Activated CD4-positive, alpha-beta memory T cell treated with anti-CD3 and anti-CD28 coated beads for 36 hours (primary cell): ENCODE measurements at regions of chr5 and their contacts with region 1.

Region 1: DNA sequence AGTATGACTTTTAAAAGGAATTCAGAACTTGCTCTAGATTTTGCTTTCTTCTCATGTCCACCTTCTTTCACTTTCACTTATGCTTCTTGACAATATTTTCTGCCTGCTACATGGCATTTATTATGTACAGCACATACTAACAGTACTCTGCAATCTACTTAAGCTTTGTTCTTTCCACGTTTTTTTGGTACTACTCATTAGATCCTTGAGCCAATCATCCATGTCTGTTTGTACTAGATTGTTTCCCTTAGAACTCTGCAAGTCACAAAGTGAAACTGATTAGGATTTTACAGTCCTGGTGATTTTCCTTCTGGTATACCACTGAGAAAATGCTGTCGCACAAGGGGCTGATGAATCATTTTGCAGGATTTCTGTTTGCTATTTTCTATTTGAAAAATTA is 78.3 kb downstream of the PARP8 start:
- DNase-seq: no peak
- H3K4me3 Mint-ChIP-seq: peak overlapping the region; percentile 72
- H3K27ac Mint-ChIP-seq: peak overlapping the region; percentile 79
- H3K4me1 Mint-ChIP-seq: peaks cover 60% of the 10 kb centered on the region
- H3K27me3 Mint-ChIP-seq: no peaks in the 10 kb centered on the region

Region 2: GRCh38 chr5:50576686-50577256 is 168.0 kb before region 1 on chr5:
- CTCF ChIA-PET with region 1: no interaction called
- POLR2A ChIA-PET with region 1: no interaction called
- intact Hi-C with region 1: loop called (anchors 5 kb)
- DNase-seq: no peak
- H3K4me3 Mint-ChIP-seq: no peak overlapping the region
- H3K27ac Mint-ChIP-seq: no peak overlapping the region
- H3K4me1 Mint-ChIP-seq: peaks cover 17% of the 10 kb centered on the region
- H3K27me3 Mint-ChIP-seq: no peaks in the 10 kb centered on the region

Region 3: GRCh38 chr5:50595199-50595598 is 149.6 kb before region 1 on chr5:
- CTCF ChIA-PET with region 1: no interaction called
- POLR2A ChIA-PET with region 1: no interaction called
- intact Hi-C with region 1: loop called (anchors 1 kb)
- DNase-seq: no peak
- H3K4me3 Mint-ChIP-seq: no peak overlapping the region
- H3K27ac Mint-ChIP-seq: peak overlapping the region; percentile 80
- H3K4me1 Mint-ChIP-seq: peaks cover 42% of the 10 kb centered on the region
- H3K27me3 Mint-ChIP-seq: no peaks in the 10 kb centered on the region

Region 4: GRCh38 chr5:50697421-50698138 is 47.2 kb before region 1 on chr5:
- CTCF ChIA-PET with region 1: no interaction called
- POLR2A ChIA-PET with region 1: no interaction called
- intact Hi-C with region 1: loop called (anchors 10 kb)
- DNase-seq: no peak
- H3K4me3 Mint-ChIP-seq: no peak overlapping the region
- H3K27ac Mint-ChIP-seq: peak overlapping the region; percentile 3
- H3K4me1 Mint-ChIP-seq: peaks cover 70% of the 10 kb centered on the region
- H3K27me3 Mint-ChIP-seq: no peaks in the 10 kb centered on the region

Region 5: GRCh38 chr5:50711273-50711672 is 33.5 kb before region 1 on chr5:
- CTCF ChIA-PET with region 1: interaction called, 3 read pairs
- POLR2A ChIA-PET with region 1: no interaction called
- intact Hi-C with region 1: loop called (anchors 1 kb)
- DNase-seq: peak; percentile 74
- H3K4me3 Mint-ChIP-seq: peak overlapping the region; percentile 54
- H3K27ac Mint-ChIP-seq: peak overlapping the region; percentile 60
- H3K4me1 Mint-ChIP-seq: peaks cover 81% of the 10 kb centered on the region
- H3K27me3 Mint-ChIP-seq: no peaks in the 10 kb centered on the region

Region 6: GRCh38 chr5:50717651-50718050 is 27.1 kb before region 1 on chr5:
- CTCF ChIA-PET with region 1: interaction called, 3 read pairs
- POLR2A ChIA-PET with region 1: no interaction called
- intact Hi-C with region 1: loop called (anchors 1 kb)
- DNase-seq: no peak
- H3K4me3 Mint-ChIP-seq: no peak overlapping the region
- H3K27ac Mint-ChIP-seq: no peak overlapping the region
- H3K4me1 Mint-ChIP-seq: peaks cover 80% of the 10 kb centered on the region
- H3K27me3 Mint-ChIP-seq: no peaks in the 10 kb centered on the region

Region 7: DNA sequence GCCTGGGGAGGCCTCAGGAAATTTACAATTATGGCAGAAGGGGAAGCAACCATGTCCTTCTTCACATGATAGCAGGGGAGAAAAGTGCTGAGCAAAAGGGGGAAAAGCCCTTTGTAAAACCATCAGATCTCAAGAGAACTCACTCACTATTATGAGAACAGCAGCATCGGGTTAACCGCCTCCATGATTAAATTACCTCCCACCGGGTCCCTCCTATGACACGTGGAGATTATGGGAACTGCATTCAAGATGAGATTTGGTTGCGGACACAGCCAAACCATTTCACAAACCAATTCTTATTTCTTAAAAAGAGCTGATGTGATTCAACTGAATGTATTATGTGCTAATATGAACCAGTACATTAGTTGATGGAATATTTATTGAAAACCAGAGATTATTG is 14.4 kb before region 1 on chr5:
- CTCF ChIA-PET with region 1: interaction called, 4 read pairs
- POLR2A ChIA-PET with region 1: interaction called, 5 read pairs
- intact Hi-C with region 1: loop called (anchors 1 kb)
- DNase-seq: no peak
- H3K4me3 Mint-ChIP-seq: no peak overlapping the region
- H3K27ac Mint-ChIP-seq: no peak overlapping the region
- H3K4me1 Mint-ChIP-seq: peaks cover 65% of the 10 kb centered on the region
- H3K27me3 Mint-ChIP-seq: no peaks in the 10 kb centered on the region